Left ventricle myocardium inferior (tissue), 1 donor: ENCODE measurements at regions of chr3 and their contacts with region 1.

Region 1: DNA sequence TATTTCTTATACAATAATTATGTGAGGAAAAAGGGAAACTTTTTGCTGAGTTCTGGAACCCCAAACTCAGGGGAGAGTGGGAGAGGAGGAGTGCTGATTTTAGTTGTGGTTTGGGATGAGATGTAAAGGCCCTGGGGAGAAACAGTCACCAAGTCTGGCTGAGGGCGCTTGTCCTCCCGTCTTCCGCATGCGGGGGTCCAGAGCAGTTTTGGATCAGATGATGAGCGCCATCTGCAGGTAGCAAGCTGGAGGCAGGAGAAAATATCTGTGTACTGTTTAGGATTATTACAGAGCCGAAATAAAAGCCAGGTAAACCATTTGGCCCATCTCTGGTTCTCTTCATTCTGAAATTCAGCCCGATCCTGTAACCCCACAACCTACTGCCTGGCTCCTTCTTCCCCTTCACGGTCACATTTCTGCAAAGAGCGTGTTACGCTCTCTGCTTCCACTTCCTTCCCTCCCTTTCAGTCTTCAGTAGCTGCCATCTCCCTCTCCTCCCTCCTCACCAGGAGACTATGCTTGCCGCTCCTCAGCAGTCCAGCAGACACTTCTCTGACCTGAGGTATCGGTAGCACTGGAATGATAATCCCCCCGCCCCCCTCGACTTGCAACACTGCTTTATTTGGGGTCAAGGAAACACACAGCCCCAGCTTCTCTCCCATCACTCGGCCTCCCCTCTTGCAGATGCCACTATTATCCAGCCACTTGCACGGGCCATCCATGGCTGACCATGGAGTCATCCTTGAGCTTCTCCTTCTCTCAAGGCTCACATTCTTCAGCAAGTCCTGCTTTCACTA is 1.4 kb upstream of the PARP14 start:
- DNase-seq: peak; percentile 78
- H3K4me3 ChIP-seq: peak overlapping the region; percentile 80
- H3K27ac ChIP-seq: peak overlapping the region; percentile 92
- H3K4me1 ChIP-seq: peaks cover 55% of the 10 kb centered on the region
- H3K27me3 ChIP-seq: no peaks in the 10 kb centered on the region
- CTCF ChIP-seq: peak; percentile 88

Region 2: GRCh38 chr3:121878411-121878810 is 800.9 kb before region 1 on chr3:
- intact Hi-C with region 1: no loop called
- DNase-seq: no peak
- H3K4me3 ChIP-seq: no peak overlapping the region
- H3K27ac ChIP-seq: no peak overlapping the region
- H3K4me1 ChIP-seq: no peaks in the 10 kb centered on the region
- H3K27me3 ChIP-seq: no peaks in the 10 kb centered on the region
- CTCF ChIP-seq: no peak

Region 3: DNA sequence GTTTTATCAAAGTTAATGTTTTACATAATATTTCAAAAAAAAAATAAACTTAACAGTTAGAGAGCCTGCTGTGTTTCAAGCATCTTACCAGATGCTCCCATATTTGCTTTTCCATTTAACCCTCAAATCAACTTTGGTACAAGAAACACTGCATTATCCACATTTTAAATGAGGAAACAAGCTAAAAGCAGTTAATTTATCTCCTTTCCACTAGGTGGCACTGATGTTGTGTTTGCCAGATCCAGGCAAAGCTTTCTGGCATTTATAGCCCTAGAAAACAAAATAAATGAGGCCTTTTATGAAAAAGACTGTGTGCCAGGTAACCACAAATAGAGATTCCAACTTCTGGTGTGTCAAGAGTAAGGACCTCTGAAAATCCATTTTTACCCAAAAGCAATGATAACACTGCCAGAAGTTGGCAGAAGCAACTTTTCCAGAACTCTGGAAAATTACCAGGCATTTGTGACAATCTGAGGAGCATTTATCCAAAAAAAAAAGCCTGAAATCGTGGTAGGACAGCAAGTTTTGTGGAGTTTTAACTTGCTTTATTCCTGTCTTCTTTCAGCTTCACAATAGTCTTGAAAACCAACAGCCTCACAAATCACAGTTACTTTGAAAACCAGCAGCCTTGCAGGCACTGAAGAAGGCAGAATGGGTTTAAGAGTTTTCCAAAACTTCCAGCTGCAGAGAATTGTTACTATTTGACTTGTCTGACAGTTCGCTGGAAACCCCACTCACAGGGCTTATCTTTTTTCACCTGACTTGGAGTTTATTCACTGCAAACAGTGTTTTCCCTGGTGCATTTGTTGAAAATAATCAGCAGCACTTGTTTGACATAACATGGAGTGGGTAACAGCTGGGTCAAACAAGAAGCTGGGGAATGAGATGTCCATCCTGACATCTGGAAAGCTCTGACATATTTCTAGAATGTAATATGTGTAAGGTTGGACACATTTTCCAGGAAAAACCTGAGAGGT is 286.1 kb before region 1 on chr3:
- intact Hi-C with region 1: loop called (anchors 5 kb)
- DNase-seq: no peak
- H3K4me3 ChIP-seq: no peak overlapping the region
- H3K27ac ChIP-seq: peak overlapping the region; percentile 66
- H3K4me1 ChIP-seq: peaks cover 43% of the 10 kb centered on the region
- H3K27me3 ChIP-seq: no peaks in the 10 kb centered on the region
- CTCF ChIP-seq: peak; percentile 75

Region 4: GRCh38 chr3:122564155-122564912 is 114.9 kb before region 1 on chr3 and contains the starts of genes DTX3L and PARP9:
- intact Hi-C with region 1: loop called (anchors 5 kb)
- DNase-seq: peak; percentile 86
- H3K4me3 ChIP-seq: peak within 1 kb of the TSS; percentile 86
- H3K27ac ChIP-seq: peak within 1 kb of the TSS; percentile 95
- H3K4me1 ChIP-seq: peaks cover 56% of the 10 kb centered on the region
- H3K27me3 ChIP-seq: no peaks in the 10 kb centered on the region
- CTCF ChIP-seq: no peak
- total RNA-seq, gene DTX3L: 13.6 TPM
- total RNA-seq, gene PARP9: 12.6 TPM

Region 5: GRCh38 chr3:122786066-122786465 is 106.8 kb after region 1 on chr3:
- intact Hi-C with region 1: no loop called
- DNase-seq: no peak
- H3K4me3 ChIP-seq: no peak overlapping the region
- H3K27ac ChIP-seq: no peak overlapping the region
- H3K4me1 ChIP-seq: no peaks in the 10 kb centered on the region
- H3K27me3 ChIP-seq: no peaks in the 10 kb centered on the region
- CTCF ChIP-seq: no peak